Activated naive CD4-positive, alpha-beta T cell treated with anti-CD3 and anti-CD28 coated beads for 36 hours (primary cell): ENCODE measurements at regions of chr4 and their contacts with region 1.

Region 1: GRCh38 chr4:9704551-9705332 is 76.7 kb upstream of the DRD5 start:
- DNase-seq: peak; percentile 45
- H3K4me3 Mint-ChIP-seq: no peak overlapping the region
- H3K27ac Mint-ChIP-seq: no peak overlapping the region
- H3K4me1 Mint-ChIP-seq: peaks cover 9% of the 10 kb centered on the region
- H3K27me3 Mint-ChIP-seq: no peaks in the 10 kb centered on the region

Region 2: GRCh38 chr4:9624458-9624857 is 80.3 kb before region 1 on chr4:
- CTCF ChIA-PET with region 1: no interaction called
- intact Hi-C with region 1: no loop called
- DNase-seq: no peak
- H3K4me3 Mint-ChIP-seq: no peak overlapping the region
- H3K27ac Mint-ChIP-seq: no peak overlapping the region
- H3K4me1 Mint-ChIP-seq: no peaks in the 10 kb centered on the region
- H3K27me3 Mint-ChIP-seq: no peaks in the 10 kb centered on the region

Region 3: DNA sequence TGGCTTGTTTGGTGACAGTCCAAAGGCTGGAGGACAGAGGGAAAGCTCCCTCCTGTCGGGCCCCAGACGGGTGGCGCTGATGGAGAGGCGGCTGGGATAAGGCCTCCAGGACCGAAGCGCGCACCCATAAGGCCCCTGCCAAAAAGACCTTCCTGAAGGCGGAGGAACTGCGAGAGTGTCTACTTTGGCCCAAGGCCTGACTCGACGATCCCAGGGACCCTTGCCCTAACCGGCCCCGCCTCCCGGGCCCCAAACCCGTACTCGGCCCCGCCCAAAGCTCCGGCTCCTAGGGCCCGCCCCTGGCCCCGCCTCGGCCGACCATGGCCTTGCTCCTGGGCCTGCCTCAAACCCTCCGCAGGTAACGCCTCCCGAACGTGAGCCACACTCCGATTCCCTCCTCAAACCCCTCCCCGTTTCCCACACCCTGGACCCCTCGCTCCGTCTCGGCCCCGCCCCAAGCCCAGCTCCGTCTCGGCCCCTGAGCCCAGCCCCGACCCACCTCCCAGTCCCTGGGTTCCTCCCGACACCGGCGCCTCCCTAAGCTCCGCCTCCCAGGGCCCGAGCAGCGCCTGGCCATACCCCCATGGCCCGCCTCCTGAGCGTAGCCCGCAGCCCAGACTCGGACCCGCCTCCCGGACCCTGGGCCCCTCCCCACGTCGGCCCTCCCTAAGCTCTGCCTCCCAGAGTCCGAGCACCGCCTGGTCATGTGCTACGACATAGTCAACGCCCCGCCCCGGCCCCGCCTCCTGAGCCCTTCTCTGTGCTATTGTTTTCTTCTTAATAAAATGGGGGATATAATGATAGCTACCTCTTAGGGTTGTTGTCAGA is 13.3 kb before region 1 on chr4:
- CTCF ChIA-PET with region 1: interaction called, 24 read pairs
- intact Hi-C with region 1: no loop called
- DNase-seq: peak; percentile 93
- H3K4me3 Mint-ChIP-seq: peak overlapping the region; percentile 82
- H3K27ac Mint-ChIP-seq: peak overlapping the region; percentile 77
- H3K4me1 Mint-ChIP-seq: peaks cover 24% of the 10 kb centered on the region
- H3K27me3 Mint-ChIP-seq: no peaks in the 10 kb centered on the region

Region 4: DNA sequence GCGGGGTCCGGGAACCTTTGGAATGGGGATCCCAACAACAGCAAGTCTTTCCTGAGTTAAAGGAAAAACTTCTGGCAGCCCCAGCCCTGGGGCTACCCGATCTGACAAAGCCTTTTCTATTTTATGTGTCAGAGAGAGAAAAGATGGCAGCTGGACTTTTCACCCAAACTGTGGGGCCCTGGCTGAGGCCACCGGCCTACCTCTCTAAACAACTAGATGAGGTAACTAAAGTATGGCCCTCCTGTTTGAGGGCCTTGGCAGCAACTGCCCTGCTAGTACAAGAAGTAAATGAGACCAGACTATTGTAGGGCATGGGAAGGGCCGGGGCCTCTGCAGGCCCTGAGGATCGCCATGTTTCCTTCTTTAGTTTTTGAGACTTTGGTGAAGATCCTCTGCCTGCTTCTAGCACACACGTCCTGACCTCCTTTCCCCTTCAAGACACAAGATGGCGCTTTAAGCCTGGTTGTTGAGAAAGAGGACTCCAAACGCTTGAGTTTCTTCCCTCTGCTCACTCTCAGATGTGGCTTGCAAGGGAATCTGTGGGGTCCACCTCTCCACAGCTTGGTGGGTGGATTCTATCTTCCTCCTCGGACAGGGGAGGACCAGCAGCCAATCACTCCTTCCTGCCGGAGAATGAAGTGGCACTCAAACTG is 58.2 kb after region 1 on chr4:
- CTCF ChIA-PET with region 1: interaction called, 3 read pairs
- intact Hi-C with region 1: loop called (anchors 1 kb)
- DNase-seq: peak; percentile 63
- H3K4me3 Mint-ChIP-seq: no peak overlapping the region
- H3K27ac Mint-ChIP-seq: no peak overlapping the region
- H3K4me1 Mint-ChIP-seq: no peaks in the 10 kb centered on the region
- H3K27me3 Mint-ChIP-seq: peaks cover 16% of the 10 kb centered on the region

Region 5: DNA sequence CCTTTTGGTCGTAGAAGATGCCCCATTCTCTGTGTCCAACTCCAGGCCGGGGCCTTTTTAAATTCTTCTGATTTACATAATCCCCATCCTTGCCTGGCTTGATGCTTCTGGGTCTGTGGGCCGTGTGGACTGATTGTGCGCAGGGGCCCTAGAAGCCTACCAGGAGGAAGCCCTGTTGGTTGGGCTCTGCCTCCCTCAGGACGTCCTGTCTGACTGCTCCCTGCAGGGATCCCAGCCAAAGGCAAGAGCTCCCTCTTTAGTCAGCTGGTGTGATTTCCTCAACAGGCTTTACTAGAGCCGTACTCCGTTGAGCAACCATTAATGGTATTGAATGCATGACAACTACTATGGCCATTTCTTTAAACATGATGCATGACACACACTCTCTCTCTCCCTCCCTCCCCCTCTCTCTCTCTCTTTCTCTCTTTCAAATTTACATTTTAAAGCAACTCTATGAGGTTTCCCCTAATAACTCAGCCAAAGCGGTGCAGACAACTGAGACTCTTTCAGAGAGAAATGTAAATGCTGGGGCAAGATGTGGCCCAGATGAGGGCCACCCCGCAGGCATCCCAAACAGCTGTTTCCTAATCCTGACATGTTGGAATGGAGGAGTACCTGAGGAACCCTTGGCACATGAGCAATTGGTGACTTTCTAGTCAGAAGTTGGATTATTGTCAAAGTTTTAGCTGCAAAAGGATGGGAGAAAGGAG is 194.0 kb after region 1 on chr4:
- CTCF ChIA-PET with region 1: no interaction called
- intact Hi-C with region 1: loop called (anchors 1 kb)
- DNase-seq: peak; percentile 30
- H3K4me3 Mint-ChIP-seq: no peak overlapping the region
- H3K27ac Mint-ChIP-seq: no peak overlapping the region
- H3K4me1 Mint-ChIP-seq: no peaks in the 10 kb centered on the region
- H3K27me3 Mint-ChIP-seq: no peaks in the 10 kb centered on the region

Region 6: GRCh38 chr4:9964879-9965278 is 260.1 kb after region 1 on chr4:
- CTCF ChIA-PET with region 1: no interaction called
- intact Hi-C with region 1: no loop called
- DNase-seq: no peak
- H3K4me3 Mint-ChIP-seq: no peak overlapping the region
- H3K27ac Mint-ChIP-seq: no peak overlapping the region
- H3K4me1 Mint-ChIP-seq: peaks cover 2% of the 10 kb centered on the region
- H3K27me3 Mint-ChIP-seq: no peaks in the 10 kb centered on the region

Region 7: DNA sequence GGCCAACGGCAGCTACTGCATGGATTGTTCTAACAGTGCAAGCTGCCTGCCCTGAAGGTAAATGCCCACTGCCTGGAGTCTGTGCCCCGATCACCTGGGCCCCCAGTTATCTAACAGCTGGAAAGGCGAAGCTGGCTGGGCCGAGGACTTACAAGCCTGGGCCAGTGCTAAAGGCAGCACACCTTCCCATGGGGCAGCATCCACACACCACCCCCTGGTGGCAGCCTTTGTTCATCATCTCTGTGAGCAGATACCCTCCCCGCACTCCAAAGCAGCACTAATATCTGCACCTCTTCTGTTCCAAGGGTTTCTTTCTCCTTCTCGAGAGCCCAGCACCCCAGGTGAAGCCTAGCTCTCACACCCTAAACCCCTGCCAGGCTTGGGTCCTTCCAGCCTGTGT is 309.0 kb after region 1 on chr4:
- CTCF ChIA-PET with region 1: interaction called, 50 read pairs
- intact Hi-C with region 1: loop called (anchors 1 kb)
- DNase-seq: peak; percentile 73
- H3K4me3 Mint-ChIP-seq: no peak overlapping the region
- H3K27ac Mint-ChIP-seq: no peak overlapping the region
- H3K4me1 Mint-ChIP-seq: peaks cover 5% of the 10 kb centered on the region
- H3K27me3 Mint-ChIP-seq: no peaks in the 10 kb centered on the region

Region 8: GRCh38 chr4:10223782-10224181 is 519.0 kb after region 1 on chr4:
- CTCF ChIA-PET with region 1: no interaction called
- intact Hi-C with region 1: no loop called
- DNase-seq: no peak
- H3K4me3 Mint-ChIP-seq: no peak overlapping the region
- H3K27ac Mint-ChIP-seq: no peak overlapping the region
- H3K4me1 Mint-ChIP-seq: no peaks in the 10 kb centered on the region
- H3K27me3 Mint-ChIP-seq: no peaks in the 10 kb centered on the region

Region 9: DNA sequence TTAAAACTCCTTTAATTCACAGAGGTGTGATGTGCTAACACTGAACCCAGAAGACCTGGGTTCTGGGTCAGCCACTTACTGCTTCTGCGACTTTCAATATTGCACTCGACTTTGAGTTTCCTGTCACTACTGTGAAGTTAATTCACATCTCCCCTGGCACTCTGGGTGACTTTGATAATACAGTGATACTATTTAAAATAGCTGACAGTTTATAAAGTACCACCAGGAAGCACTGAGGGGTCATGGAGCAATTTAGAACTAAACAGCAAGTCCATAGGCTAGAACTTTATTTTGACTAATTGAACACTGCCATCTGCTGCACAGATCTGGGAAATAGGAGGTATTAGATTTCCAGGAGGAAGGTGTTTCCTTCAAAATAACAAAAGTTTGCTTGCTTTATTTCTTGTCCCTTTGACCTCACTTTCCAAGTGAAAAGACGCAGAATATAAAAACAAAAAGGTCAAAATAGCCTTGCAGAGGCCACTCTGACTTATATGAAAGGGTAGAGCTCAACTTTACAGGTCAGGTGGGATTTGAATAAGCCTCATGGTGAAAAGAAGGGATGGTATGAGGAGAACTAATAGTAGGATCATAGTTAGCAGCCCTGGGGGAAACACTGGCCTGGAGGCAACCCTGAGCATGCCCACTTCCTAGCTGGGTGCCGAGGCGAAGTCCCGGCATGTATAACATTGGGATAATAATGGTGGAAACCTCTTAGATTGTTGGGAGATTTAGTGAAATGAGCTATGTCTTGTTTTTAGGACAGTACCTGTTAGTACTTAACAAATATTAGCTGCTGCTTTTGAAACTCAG is 699.1 kb after region 1 on chr4:
- CTCF ChIA-PET with region 1: interaction called, 3 read pairs
- intact Hi-C with region 1: loop called (anchors 5 kb)
- DNase-seq: peak; percentile 38
- H3K4me3 Mint-ChIP-seq: no peak overlapping the region
- H3K27ac Mint-ChIP-seq: no peak overlapping the region
- H3K4me1 Mint-ChIP-seq: no peaks in the 10 kb centered on the region
- H3K27me3 Mint-ChIP-seq: no peaks in the 10 kb centered on the region

Region 10: DNA sequence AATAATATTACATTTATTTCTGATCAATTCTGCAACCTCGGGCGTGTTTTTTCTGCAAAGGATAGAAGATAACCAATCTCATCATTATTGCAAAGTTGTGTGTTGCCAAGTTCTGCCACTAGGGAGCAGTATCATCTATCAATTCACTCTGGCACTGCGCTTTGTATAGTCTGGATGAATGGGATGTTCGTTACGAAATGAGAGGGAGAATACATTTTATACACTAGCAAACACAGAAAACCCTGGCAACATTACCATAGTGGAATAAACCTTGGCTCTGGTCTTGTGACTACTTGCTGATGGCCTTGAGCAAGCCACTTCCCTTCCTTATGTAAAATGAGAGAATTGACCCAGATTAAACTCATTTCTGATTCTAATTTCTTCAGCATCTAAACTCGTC is 850.0 kb after region 1 on chr4:
- CTCF ChIA-PET with region 1: no interaction called
- intact Hi-C with region 1: loop called (anchors 10 kb)
- DNase-seq: peak; percentile 71
- H3K4me3 Mint-ChIP-seq: no peak overlapping the region
- H3K27ac Mint-ChIP-seq: no peak overlapping the region
- H3K4me1 Mint-ChIP-seq: peaks cover 3% of the 10 kb centered on the region
- H3K27me3 Mint-ChIP-seq: peaks cover 11% of the 10 kb centered on the region